Sigmoid colon (tissue), 7 donors: ENCODE measurements at regions of chr5 and their contacts with region 1.

Region 1: GRCh38 chr5:55994574-55995333 is at the start of gene IL6ST:
- DNase-seq: peak; percentile 99
- H3K4me3 ChIP-seq: peak within 1 kb of the TSS; percentile 63 to 92 (median 85)
- H3K27ac ChIP-seq: peak within 1 kb of the TSS; percentile 94 to 100 (median 99)
- H3K4me1 ChIP-seq: peaks cover 0 to 48% (median 45%) of the 10 kb centered on the region in 4 donors
- H3K27me3 ChIP-seq: no peaks in the 10 kb centered on the region
- CTCF ChIP-seq: no peak
- EP300 ChIP-seq: peak in 2 of 4 donors; percentile 33 to 54
- POLR2A ChIP-seq: peak; percentile 85 to 86
- total RNA-seq, gene IL6ST: 206 to 373 (median 311) TPM

Region 2: DNA sequence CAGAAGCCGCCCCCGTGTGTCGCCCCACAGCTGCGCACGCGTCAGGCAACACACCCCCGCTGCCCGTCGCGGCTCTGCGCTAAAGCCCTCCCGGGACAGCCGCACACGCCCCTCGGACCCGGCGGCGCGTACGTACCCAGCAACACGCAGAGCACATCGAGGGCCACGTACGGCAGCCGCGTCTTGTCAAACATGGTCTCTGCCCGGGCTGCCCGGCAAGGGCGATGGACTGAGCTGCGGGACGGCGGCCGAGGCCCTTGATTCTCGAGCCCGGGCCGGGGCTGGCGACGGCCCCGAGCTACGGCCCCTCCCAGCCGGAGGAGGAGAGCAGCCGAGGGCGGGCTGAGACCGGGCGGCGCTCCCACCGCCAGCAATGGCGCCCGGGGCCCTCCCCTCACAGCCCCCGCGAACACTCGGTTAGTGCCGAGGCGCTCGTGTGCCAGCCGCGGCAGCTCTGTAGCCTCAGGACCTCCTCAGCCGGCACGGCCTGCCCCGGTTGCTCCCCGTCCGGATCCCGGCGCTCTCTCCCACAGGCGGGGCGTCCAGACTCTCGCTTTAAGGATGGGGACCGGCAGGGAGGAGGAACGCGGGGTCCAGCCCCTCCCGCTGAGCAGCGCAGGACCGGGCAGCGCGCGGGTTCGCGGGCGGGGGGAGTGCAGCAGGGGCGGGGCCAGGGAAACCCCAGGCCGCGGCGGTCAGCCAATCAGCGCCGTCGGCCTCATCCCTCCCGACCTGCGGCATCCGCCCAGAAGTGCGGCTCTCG is 460.1 kb before region 1 on chr5 and contains the start of gene PLPP1:
- intact Hi-C with region 1: loop called (anchors 10 kb)
- DNase-seq: peak; percentile 97
- H3K4me3 ChIP-seq: peak within 1 kb of the TSS; percentile 63 to 96 (median 85)
- H3K27ac ChIP-seq: peak within 1 kb of the TSS; percentile 93 to 99 (median 98)
- H3K4me1 ChIP-seq: peaks cover 0 to 41% (median 26%) of the 10 kb centered on the region in 4 donors
- H3K27me3 ChIP-seq: no peaks in the 10 kb centered on the region
- CTCF ChIP-seq: no peak
- EP300 ChIP-seq: peak in 1 of 4 donors; percentile 2
- POLR2A ChIP-seq: peak; percentile 23 to 62
- total RNA-seq, gene PLPP1: 264 to 355 (median 310) TPM

Region 3: GRCh38 chr5:56056875-56057274 is 62.1 kb after region 1 on chr5:
- intact Hi-C with region 1: loop called (anchors 5 kb)
- DNase-seq: no peak
- H3K4me3 ChIP-seq: no peak overlapping the region
- H3K27ac ChIP-seq: no peak overlapping the region
- H3K4me1 ChIP-seq: peaks cover 0 to 20% (median 16%) of the 10 kb centered on the region in 4 donors
- H3K27me3 ChIP-seq: no peaks in the 10 kb centered on the region
- CTCF ChIP-seq: no peak
- EP300 ChIP-seq: no peak
- POLR2A ChIP-seq: no peak

Region 4: GRCh38 chr5:56095579-56096102 is 100.9 kb after region 1 on chr5:
- intact Hi-C with region 1: no loop called
- DNase-seq: no peak
- H3K4me3 ChIP-seq: no peak overlapping the region
- H3K27ac ChIP-seq: no peak overlapping the region
- H3K4me1 ChIP-seq: no peaks in the 10 kb centered on the region
- H3K27me3 ChIP-seq: no peaks in the 10 kb centered on the region
- CTCF ChIP-seq: no peak
- EP300 ChIP-seq: no peak
- POLR2A ChIP-seq: no peak

Region 5: DNA sequence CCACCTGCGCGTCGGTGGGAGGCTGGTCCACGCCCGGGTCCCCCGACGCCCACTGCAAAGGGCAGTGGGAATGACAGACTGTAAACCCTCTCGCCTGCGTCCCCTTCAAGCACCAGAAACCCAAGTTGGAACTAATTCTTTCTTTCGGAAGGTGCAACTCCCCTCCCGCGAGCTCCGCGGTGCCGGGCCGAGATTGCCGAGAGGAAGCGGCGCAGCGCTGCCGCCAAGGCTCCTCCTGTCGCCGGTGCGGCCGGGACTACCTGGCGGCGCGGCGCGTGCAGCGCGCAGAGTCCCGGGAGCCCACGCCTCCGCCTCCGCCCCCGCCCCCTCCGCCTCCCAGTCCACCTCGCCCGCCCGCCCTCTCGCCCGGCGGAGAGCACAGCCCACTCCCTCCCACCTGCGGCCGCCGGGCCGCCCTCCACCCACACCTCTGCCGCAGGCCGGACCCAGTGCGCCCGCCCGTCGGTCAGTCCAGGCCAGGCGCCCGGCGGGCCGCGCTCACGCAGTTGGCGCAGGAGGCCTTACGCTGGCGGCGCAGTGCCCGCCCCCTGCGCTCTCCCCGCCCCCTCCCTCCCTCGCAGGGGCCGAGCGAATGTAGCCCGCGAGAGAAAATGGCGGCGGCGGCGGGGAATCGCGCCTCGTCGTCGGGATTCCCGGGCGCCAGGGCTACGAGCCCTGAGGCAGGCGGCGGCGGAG is 820.4 kb after region 1 on chr5 and contains the start of gene MAP3K1:
- intact Hi-C with region 1: loop called (anchors 10 kb)
- DNase-seq: peak; percentile 81
- H3K4me3 ChIP-seq: peak within 1 kb of the TSS; percentile 66 to 88 (median 72)
- H3K27ac ChIP-seq: peak within 1 kb of the TSS; percentile 84 to 93 (median 86)
- H3K4me1 ChIP-seq: peaks cover 0 to 9% (median 3%) of the 10 kb centered on the region in 4 donors
- H3K27me3 ChIP-seq: no peaks in the 10 kb centered on the region
- CTCF ChIP-seq: no peak
- EP300 ChIP-seq: no peak
- POLR2A ChIP-seq: peak in 1 of 2 donors; percentile 31
- total RNA-seq, gene MAP3K1: 7.2 to 12.5 (median 10.3) TPM

Region 6: DNA sequence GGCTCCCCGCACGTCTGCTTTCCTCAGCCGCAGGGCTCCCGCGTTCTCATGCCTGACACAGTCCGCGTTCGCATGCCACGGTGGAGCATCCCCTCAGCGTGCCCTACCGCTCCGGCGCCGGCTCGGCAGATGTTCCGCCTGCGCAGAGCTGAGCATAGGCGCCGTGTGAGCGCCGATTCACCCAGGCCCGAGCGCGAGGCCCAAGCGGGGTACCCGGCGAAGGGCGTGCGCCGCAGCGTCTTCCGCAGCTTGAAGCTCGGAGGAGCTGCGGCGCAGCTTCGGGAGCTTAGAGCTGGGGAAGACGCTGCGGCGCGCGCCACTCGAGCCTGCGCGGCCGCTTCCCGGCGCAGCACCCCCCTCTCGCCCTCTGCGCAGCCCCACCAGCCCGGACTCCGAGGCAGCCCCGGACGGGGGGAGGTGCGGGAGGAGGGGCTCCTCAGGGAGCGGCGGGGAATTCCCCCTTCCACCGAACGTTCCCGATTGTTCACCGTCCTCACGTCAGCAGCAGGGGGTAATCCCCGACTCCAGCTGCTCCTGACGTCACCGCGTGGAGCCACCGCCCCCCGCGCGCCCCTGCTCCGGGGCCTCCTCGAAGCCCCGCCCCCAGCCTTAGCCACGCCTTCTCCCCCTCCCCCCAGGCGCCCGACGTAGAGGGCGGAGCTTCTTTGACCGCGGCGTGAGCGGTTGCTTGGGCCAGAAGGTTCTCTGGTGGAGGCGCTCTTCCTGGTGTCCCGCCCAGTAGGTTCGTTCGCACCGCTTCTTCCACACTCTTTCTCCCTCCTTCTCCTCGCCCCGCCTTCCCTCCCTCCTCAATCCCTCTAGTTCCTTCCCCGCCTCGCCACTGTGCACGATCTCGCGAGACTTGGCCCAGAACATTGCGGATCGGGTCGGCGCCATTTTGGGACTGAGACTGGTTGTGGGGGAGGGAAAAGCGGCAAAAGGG is 1178.7 kb after region 1 on chr5 and contains the start of gene GPBP1:
- intact Hi-C with region 1: loop called (anchors 2 kb)
- DNase-seq: peak; percentile 100
- H3K4me3 ChIP-seq: peak within 1 kb of the TSS; percentile 76 to 88 (median 86)
- H3K27ac ChIP-seq: peak within 1 kb of the TSS; percentile 95 to 100 (median 98)
- H3K4me1 ChIP-seq: peaks cover 0 to 48% (median 29%) of the 10 kb centered on the region in 4 donors
- H3K27me3 ChIP-seq: no peaks in the 10 kb centered on the region
- CTCF ChIP-seq: no peak
- EP300 ChIP-seq: peak in 2 of 4 donors; percentile 93
- POLR2A ChIP-seq: peak; percentile 66 to 80
- total RNA-seq, gene GPBP1: 52.3 to 69.2 (median 59.7) TPM